ENCODE measurements at regions of chr5 and their contacts with region 1.

Region 1: GRCh38 chr5:170225326-170226128 is 7.3 kb upstream of the C5orf58 start:
- DNase-seq: peak; percentile 59 to 69
- H3K4me3 ChIP-seq: no peak overlapping the region
- H3K4me3 Mint-ChIP-seq: no peak overlapping the region
- H3K27ac Mint-ChIP-seq: no peak overlapping the region
- H3K4me1 ChIP-seq: no peaks in the 10 kb centered on the region
- H3K4me1 Mint-ChIP-seq: no peaks in the 10 kb centered on the region
- H3K27me3 ChIP-seq: no peaks in the 10 kb centered on the region; the same call in 1 of the 2 replicates
- H3K27me3 Mint-ChIP-seq: peaks cover 8% of the 10 kb centered on the region
- CTCF ChIP-seq: peak; percentile 69 to 75

Region 2: GRCh38 chr5:169265888-169266287 is 959.6 kb before region 1 on chr5:
- CTCF ChIA-PET with region 1: no interaction called
- POLR2A ChIA-PET with region 1: no interaction called
- intact Hi-C with region 1: loop called (anchors 10 kb)
- DNase-seq: no peak
- H3K4me3 ChIP-seq: no peak overlapping the region
- H3K4me3 Mint-ChIP-seq: no peak overlapping the region
- H3K27ac Mint-ChIP-seq: peak overlapping the region; percentile 20
- H3K4me1 ChIP-seq: peaks cover 13% of the 10 kb centered on the region
- H3K4me1 Mint-ChIP-seq: peaks cover 40% of the 10 kb centered on the region
- H3K27me3 ChIP-seq: no peaks in the 10 kb centered on the region
- H3K27me3 Mint-ChIP-seq: no peaks in the 10 kb centered on the region
- CTCF ChIP-seq: peak in 1 of 2 experiments; percentile 27

Region 3: DNA sequence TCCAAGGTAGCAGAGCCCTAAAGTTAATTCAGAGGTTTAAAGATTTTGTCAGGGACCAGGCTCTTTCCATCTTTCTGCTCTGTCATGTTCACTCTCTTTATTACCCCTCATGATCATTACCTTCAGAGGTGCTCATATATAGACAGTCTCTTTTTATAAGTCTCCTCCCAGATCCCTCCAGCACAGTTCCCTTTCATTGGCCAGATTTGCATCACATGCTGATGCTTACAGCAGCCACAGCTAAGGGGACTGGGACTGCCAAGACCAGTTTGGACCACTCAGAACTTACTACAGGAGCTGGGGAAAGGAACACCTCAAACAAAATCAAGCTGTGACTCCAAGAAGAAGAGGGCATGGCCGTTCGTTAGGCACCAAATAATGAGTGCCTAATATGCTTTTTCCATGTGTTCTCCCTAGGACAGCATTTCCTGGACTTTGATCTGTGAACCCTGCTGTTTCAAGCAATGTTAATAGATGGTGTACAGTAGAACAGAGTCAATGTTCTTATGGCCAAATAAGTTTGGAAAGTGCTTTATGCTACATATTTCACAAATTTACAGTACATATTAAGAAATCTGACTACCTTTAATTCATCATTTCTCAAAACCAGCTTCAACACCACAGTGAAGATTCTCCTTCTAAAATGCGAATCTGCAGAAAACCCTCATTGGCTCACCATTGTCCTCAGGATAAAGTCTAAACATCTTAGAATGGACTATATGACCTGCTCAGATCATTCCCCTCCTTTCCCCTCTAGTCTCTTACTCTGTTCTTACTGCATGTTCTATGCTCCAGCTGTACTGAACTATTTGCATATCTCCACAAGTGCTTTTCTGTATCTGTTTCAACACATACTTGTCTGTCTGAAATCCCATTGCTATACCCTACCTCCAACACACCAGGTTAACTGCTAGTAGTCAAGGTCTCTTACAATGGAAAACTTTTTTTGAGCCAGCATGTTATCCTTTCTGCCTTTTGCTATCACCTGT is 10.6 kb after region 1 on chr5:
- CTCF ChIA-PET with region 1: no interaction called
- POLR2A ChIA-PET with region 1: no interaction called
- intact Hi-C with region 1: no loop called
- DNase-seq: no peak
- H3K4me3 ChIP-seq: no peak overlapping the region
- H3K4me3 Mint-ChIP-seq: no peak overlapping the region
- H3K27ac Mint-ChIP-seq: no peak overlapping the region
- H3K4me1 ChIP-seq: no peaks in the 10 kb centered on the region
- H3K4me1 Mint-ChIP-seq: no peaks in the 10 kb centered on the region
- H3K27me3 ChIP-seq: no peaks in the 10 kb centered on the region; the same call in 1 of the 2 replicates
- H3K27me3 Mint-ChIP-seq: peaks cover 4% of the 10 kb centered on the region
- CTCF ChIP-seq: no peak

Region 4: DNA sequence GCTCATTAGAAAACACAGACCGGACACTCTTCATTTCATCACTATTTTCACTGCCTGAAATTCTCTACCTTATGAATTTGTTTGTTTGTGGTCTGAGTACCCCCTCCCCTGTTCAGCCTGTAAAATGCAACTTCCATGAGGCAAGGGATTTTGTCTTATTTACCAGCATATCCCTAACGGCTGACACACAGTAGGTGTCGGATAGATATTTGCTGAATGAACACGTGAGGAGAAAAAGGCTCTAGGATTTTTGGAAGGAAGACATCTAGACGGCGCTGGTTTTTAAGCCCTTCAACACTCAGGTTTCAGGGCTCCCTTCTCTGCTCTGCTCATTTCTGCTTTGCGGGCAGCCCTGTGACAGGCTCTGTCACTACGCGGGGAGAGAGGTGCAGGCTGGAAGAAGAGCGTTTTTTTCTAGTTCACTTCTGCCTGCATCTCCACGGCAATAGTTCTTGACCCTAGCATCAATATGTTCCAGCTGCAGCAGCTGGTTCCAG is 122.7 kb after region 1 on chr5:
- CTCF ChIA-PET with region 1: no interaction called
- POLR2A ChIA-PET with region 1: no interaction called
- intact Hi-C with region 1: loop called (anchors 10 kb)
- DNase-seq: no peak
- H3K4me3 ChIP-seq: no peak overlapping the region
- H3K4me3 Mint-ChIP-seq: no peak overlapping the region
- H3K27ac Mint-ChIP-seq: no peak overlapping the region
- H3K4me1 ChIP-seq: no peaks in the 10 kb centered on the region
- H3K4me1 Mint-ChIP-seq: no peaks in the 10 kb centered on the region
- H3K27me3 ChIP-seq: no peaks in the 10 kb centered on the region; the same call in 1 of the 2 replicates
- H3K27me3 Mint-ChIP-seq: peaks cover 30% of the 10 kb centered on the region
- CTCF ChIP-seq: no peak

Measured in Caco-2 (cell line).